Aorta (tissue), 5 donors: ENCODE measurements at regions of chr11 and their contacts with region 1.

Region 1: GRCh38 chr11:95567685-95568084 is 221.9 kb downstream of the FAM76B start:
- DNase-seq: no peak
- ATAC-seq: peak; percentile 57
- H3K4me3 ChIP-seq: no peak overlapping the region
- H3K27ac ChIP-seq: peak overlapping the region in 1 of 2 donors; percentile 77
- H3K4me1 ChIP-seq: peaks cover 11 to 12% of the 10 kb centered on the region in 2 donors
- H3K27me3 ChIP-seq: no peaks in the 10 kb centered on the region

Region 2: GRCh38 chr11:95156916-95157541 is 410.7 kb before region 1 on chr11:
- intact Hi-C with region 1: loop called in 1 of 2 experiments (anchors 5 kb)
- DNase-seq: peak; percentile 75 to 78
- ATAC-seq: peak; percentile 85
- H3K4me3 ChIP-seq: no peak overlapping the region
- H3K27ac ChIP-seq: peak overlapping the region; percentile 7 to 70
- H3K4me1 ChIP-seq: peaks cover 0 to 2% of the 10 kb centered on the region in 2 donors
- H3K27me3 ChIP-seq: no peaks in the 10 kb centered on the region

Region 3: DNA sequence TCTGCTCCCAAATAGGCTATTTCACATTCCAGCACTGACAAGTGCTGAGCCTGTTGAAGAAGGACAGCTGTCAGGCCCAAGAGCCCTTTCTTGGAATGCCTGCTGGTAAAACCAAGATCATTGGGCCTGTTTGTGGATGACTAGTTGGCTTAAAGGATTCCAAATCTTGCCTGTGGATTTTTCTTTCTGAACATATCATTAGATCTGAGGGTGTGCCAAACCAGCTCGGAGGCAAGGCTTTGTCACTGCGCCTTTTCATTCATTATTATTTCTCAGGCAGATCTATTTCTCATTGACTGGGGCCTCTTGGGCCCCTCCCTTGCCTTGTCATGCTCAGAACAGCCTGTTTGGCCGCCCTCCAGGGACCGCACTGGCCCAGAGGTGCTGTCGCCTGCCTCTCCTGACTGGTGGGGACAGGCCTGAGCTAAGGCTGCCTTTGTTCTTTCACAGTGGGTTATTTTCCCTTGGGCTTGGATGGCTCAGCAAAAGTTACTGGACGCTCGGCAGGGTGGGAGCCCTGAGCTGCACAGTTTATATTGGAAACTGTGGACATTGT is 114.0 kb before region 1 on chr11:
- intact Hi-C with region 1: loop called in 1 of 2 experiments (anchors 5 kb)
- DNase-seq: peak; percentile 82 to 85
- ATAC-seq: peak; percentile 37
- H3K4me3 ChIP-seq: no peak overlapping the region
- H3K27ac ChIP-seq: peak overlapping the region; percentile 15 to 77
- H3K4me1 ChIP-seq: peaks cover 0 to 11% of the 10 kb centered on the region in 2 donors
- H3K27me3 ChIP-seq: no peaks in the 10 kb centered on the region

Region 4: GRCh38 chr11:95521133-95521542 is 46.5 kb before region 1 on chr11:
- intact Hi-C with region 1: no loop called
- DNase-seq: no peak
- ATAC-seq: no peak
- H3K4me3 ChIP-seq: no peak overlapping the region
- H3K27ac ChIP-seq: no peak overlapping the region
- H3K4me1 ChIP-seq: no peaks in the 10 kb centered on the region
- H3K27me3 ChIP-seq: no peaks in the 10 kb centered on the region

Region 5: DNA sequence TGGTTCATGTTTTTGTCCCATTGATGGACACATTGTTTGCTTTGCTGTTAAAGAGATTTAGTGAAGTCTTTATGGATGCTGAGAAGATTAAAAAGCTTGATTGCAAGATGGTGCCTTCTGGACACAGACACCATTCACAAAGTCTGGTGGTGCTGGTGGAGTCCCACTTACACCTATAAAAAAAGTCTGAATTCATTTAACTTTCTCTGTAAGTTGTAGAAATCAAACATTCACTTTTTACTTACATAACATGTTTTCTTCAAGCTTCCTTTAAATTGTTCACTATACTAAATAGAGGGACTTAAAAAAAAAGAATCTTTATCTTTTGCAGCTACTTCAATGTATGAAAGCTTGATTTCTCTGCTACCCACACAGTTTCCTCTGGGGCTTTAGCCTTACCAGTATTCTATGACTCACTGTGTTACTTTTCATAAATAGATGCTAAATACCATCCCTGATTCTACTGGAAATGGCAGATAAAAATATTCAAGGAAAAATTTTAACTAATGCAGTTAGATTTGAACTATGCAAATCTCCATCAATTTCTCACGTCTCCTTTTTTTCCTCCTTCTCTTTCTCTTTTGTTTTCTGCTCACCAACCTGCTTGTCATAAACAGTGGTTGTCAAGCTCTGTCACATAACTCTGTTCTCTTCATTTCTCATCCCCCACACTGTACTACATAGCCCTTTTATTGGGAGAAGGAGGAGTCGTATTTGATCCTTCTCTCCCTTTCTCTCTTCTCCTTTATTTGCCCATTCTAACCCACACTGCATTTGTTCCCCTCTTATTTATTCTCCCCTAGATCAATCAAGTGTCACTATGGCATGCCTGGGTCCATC is 132.2 kb after region 1 on chr11:
- intact Hi-C with region 1: loop called (anchors 5 to 10 kb)
- DNase-seq: no peak
- ATAC-seq: no peak
- H3K4me3 ChIP-seq: no peak overlapping the region
- H3K27ac ChIP-seq: no peak overlapping the region
- H3K4me1 ChIP-seq: no peaks in the 10 kb centered on the region
- H3K27me3 ChIP-seq: no peaks in the 10 kb centered on the region